ENCODE measurements at regions of chr13 and their contacts with region 1.

Region 1: DNA sequence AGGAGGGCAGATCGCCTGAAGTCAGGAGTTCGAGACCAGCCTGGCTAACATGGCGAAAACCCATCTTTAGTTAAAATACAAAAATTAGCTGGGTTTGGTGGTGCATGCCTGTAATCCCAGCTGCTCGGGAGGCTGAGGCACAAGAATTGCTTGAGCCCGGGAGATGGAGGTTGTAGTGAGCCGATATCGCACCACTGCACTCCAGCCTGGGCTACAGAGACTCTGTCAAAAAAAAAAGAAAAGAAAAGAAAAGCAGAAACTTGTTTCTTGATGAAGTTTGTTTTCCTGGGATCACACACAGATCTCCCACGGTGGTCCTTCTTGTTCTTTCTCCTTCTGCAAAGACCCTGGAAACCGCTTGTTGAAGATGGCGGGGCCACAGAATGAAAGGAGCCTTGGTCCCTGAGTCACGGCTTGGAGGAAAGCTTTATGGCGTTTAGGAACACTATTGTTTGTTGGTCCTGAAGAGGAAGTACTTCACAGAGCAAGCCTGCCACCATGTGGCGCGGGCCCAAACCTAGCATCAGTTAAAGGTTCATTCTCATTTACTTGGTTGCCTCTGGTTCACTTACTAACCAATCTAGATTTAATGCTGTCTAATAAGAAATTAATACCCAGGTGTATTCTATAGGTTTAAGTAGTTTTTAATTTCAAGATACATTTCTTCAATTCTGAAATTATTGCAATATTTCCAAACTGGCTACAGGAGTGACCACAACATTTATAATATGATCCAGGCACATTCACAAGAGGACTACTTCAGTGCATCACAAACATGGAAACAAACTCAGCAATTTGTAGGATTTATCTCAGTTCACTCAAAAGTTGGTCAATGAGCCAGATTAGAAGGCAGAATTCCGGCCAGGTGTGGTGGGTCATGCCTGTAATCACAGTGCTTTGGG is 21.3 kb upstream of the ARL11 start:
- DNase-seq: peak; percentile 87

Region 2: GRCh38 chr13:49292742-49293486 is 314.1 kb before region 1 on chr13:
- in situ Hi-C with region 1: loop called (anchors 25 kb)
- DNase-seq: peak; percentile 70

Region 3: GRCh38 chr13:49649244-49649962 is 42.4 kb after region 1 on chr13:
- in situ Hi-C with region 1: no loop called
- DNase-seq: peak; percentile 45

Region 4: DNA sequence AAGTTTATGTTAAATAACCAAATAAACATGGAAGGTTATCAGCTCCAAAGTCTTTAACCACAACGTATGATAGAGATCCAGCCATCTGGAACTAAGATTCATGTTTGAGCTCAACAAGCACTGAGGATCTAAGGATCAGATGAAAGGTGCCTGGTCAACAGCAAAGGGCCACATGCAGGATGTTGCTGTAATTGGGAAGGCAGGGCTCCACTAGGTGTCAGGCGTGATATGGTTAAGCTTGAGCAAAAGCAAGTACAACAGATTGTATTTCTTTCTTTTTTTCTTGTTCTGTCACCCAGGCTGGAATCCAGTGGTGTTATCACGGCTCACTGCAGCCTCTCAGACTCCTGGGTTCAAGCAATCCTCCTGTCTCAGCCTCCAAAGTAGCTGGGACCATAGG is 72.2 kb after region 1 on chr13:
- in situ Hi-C with region 1: no loop called
- DNase-seq: no peak